PC-9 (cell line): ENCODE measurements at regions of chr5 and their contacts with region 1.

Region 1: DNA sequence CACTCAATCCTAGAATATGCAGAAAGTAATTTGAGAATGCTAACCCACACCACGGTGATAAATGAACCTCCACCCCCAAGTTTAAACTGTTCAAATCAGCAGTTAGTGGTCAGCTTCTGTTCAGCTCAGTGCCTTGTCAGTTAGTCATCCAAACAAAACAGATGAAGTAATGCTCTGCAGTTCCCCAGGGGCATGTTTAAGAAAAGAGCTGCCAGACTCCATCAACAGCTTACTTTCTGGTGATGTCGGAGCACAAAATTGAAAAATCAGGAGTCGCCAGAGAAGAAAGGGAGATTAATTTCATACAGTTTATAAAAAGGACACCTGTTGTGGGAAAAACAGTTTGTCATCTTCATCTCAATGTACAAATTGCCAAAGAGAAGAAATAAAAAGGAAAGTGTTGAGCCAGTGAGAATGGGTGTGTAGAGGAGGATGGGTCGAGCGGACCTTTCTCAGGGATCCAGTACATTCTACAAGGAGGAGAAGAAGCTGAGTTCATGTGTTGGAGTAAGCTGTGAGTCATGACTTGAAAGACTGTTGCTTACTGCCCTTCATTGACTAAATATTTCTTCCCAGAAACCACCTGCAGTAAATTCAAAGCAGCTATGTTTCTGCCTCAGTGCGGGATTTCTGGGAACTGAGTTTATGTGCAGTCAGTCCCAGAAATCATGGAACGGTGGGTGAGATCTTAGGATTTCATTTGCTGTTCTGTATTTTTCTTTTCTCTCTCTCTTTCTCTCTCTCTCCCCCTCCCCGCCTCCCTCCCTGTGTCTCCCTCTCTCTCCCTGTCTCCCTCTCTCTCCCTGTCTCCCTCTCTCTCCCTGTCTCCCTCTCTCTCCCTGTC is 13.7 kb downstream of the TRIO start:
- DNase-seq: peak; percentile 83 to 99
- H3K4me3 ChIP-seq: peak overlapping the region; percentile 45; the same call in 1 of the 2 replicates
- H3K27ac ChIP-seq: peak overlapping the region; percentile 87
- H3K4me1 ChIP-seq: peaks cover 76% of the 10 kb centered on the region
- H3K27me3 ChIP-seq: no peaks in the 10 kb centered on the region
- CTCF ChIP-seq: no peak; the same call in 1 of the 2 replicates

Region 2: GRCh38 chr5:14054965-14055963 is 101.6 kb before region 1 on chr5:
- CTCF ChIA-PET with region 1: no interaction called
- POLR2A ChIA-PET with region 1: interaction called, 10 read pairs
- intact Hi-C with region 1: no loop called
- DNase-seq: no peak
- H3K4me3 ChIP-seq: no peak overlapping the region
- H3K27ac ChIP-seq: no peak overlapping the region
- H3K4me1 ChIP-seq: no peaks in the 10 kb centered on the region
- H3K27me3 ChIP-seq: no peaks in the 10 kb centered on the region
- CTCF ChIP-seq: no peak

Region 3: DNA sequence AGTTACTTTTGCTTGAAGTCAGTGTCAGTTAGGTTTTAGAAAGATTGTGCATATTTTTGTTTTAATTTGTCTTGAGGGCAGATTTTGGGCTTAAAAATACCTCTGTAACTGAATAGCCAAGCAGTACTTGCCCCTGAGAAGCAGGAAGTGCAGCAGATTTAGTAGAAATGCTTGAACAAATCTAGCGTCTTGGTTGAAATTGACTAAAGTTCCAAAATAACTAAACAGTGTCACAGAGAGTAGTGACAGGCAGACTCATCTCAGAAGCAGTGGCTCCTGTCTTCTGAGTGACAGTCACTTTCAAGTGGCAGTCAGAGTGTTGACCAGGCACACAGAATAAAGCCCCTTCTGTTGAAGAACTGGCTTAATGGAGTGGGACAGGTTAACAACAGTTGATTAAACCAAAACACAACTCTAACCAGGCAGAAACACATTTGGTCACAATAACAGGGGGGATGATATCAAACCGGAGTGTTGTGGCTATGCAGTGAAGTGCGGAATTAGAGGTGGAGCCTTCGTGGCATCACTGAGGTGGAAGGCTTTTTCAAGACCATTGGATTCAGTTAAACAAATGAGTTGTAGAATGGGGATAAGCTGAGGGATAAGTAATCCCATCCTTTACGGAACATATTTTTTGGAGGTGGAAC is 15.4 kb after region 1 on chr5:
- CTCF ChIA-PET with region 1: no interaction called
- POLR2A ChIA-PET with region 1: interaction called, 10 read pairs
- intact Hi-C with region 1: loop called (anchors 1 kb)
- DNase-seq: no peak
- H3K4me3 ChIP-seq: no peak overlapping the region
- H3K27ac ChIP-seq: peak overlapping the region; percentile 21; the same call in 1 of the 2 replicates
- H3K4me1 ChIP-seq: peaks cover 47% of the 10 kb centered on the region
- H3K27me3 ChIP-seq: no peaks in the 10 kb centered on the region
- CTCF ChIP-seq: no peak

Region 4: DNA sequence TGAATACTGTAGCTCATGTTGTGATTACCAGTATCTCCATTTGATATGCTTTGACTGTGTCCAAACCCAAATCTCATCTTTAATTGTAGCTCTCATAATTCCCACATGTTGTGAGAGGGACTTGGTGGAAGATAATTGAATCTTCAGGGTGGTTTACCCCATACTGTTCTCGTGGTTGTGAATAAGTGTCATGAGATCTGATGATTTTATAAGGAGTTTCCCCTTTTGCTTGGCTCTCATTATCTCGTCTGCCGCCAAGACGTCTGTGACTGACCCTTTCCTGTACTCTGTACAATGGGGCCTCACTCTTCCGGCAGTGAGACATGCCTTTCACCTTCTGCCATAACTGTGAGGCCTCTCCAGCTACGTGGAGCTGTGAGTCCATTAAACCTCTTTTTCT is 45.6 kb after region 1 on chr5:
- CTCF ChIA-PET with region 1: no interaction called
- POLR2A ChIA-PET with region 1: interaction called, 14 read pairs
- intact Hi-C with region 1: no loop called
- DNase-seq: no peak
- H3K4me3 ChIP-seq: no peak overlapping the region
- H3K27ac ChIP-seq: no peak overlapping the region
- H3K4me1 ChIP-seq: 0 out of 2 replicates have a peak, but pooled peaks cover 3% of the 10 kb centered on the region
- H3K27me3 ChIP-seq: no peaks in the 10 kb centered on the region
- CTCF ChIP-seq: no peak

Region 5: GRCh38 chr5:14225173-14225834 is 68.4 kb after region 1 on chr5:
- CTCF ChIA-PET with region 1: interaction called, 3 read pairs
- POLR2A ChIA-PET with region 1: interaction called, 7 read pairs
- intact Hi-C with region 1: loop called (anchors 2 kb)
- DNase-seq: peak in 1 of 2 experiments; percentile 43
- H3K4me3 ChIP-seq: no peak overlapping the region
- H3K27ac ChIP-seq: peak overlapping the region; percentile 33; the same call in 1 of the 2 replicates
- H3K4me1 ChIP-seq: peaks cover 24% of the 10 kb centered on the region
- H3K27me3 ChIP-seq: no peaks in the 10 kb centered on the region
- CTCF ChIP-seq: no peak

Region 6: GRCh38 chr5:14270209-14270702 is 113.4 kb after region 1 on chr5:
- CTCF ChIA-PET with region 1: interaction called, 22 read pairs
- POLR2A ChIA-PET with region 1: interaction called, 28 read pairs
- intact Hi-C with region 1: loop called (anchors 1 kb)
- DNase-seq: peak; percentile 81 to 86
- H3K4me3 ChIP-seq: 0 out of 2 replicates have a peak overlapping the region, but pooled peaks have one; percentile 8
- H3K27ac ChIP-seq: peak overlapping the region; percentile 88
- H3K4me1 ChIP-seq: peaks cover 57% of the 10 kb centered on the region
- H3K27me3 ChIP-seq: no peaks in the 10 kb centered on the region
- CTCF ChIP-seq: peak; percentile 90